ENCODE measurements at regions of chr9 and their contacts with region 1.

Region 1: GRCh38 chr9:5886114-5886939 is 4.4 kb upstream of the MLANA start:
- DNase-seq: peak; percentile 61 to 74 (median 64)
- H3K4me3 ChIP-seq: no peak overlapping the region
- H3K4me3 Mint-ChIP-seq: no peak overlapping the region
- H3K27ac ChIP-seq: no peak overlapping the region
- H3K27ac Mint-ChIP-seq: peak overlapping the region in 2 of 7 donors; percentile 27 to 74
- H3K4me1 ChIP-seq: peaks cover 5% of the 10 kb centered on the region
- H3K4me1 Mint-ChIP-seq: peaks cover 5 to 6% (median 5%) of the 10 kb centered on the region in 4 donors
- H3K27me3 ChIP-seq: no peaks in the 10 kb centered on the region
- H3K27me3 Mint-ChIP-seq: no peaks in the 10 kb centered on the region

Region 2: DNA sequence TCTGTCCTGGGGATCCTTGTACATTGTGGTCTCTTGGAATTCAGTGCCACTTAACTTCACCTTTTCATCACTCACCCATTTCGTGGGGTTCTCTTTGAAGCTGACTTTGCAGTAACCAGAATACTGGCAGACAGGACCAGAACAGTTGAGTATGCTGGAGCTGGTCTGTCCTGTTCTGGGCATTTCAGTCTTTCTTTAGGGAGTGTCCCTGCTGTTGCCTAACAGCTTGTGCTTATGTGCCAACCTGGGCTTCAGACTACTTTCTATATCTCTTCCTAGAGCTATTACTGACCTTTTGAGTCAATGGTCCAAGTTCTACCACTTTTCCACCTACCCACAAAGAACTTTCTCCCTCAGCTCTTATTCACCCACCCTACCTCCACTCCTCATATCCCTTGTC is 690.9 kb before region 1 on chr9:
- CTCF ChIA-PET with region 1: no interaction called
- POLR2A ChIA-PET with region 1: no interaction called
- intact Hi-C with region 1: no loop called
- DNase-seq: no peak
- H3K4me3 ChIP-seq: no peak overlapping the region
- H3K4me3 Mint-ChIP-seq: no peak overlapping the region
- H3K27ac ChIP-seq: no peak overlapping the region
- H3K27ac Mint-ChIP-seq: no peak overlapping the region
- H3K4me1 ChIP-seq: no peaks in the 10 kb centered on the region
- H3K4me1 Mint-ChIP-seq: no peaks in the 10 kb centered on the region
- H3K27me3 ChIP-seq: no peaks in the 10 kb centered on the region
- H3K27me3 Mint-ChIP-seq: peaks cover 3% of the 10 kb centered on the region in 2 donors

Region 3: GRCh38 chr9:5735072-5735471 is 151.3 kb before region 1 on chr9:
- CTCF ChIA-PET with region 1: no interaction called
- POLR2A ChIA-PET with region 1: no interaction called
- intact Hi-C with region 1: no loop called
- DNase-seq: no peak
- H3K4me3 ChIP-seq: no peak overlapping the region
- H3K4me3 Mint-ChIP-seq: no peak overlapping the region
- H3K27ac ChIP-seq: no peak overlapping the region
- H3K27ac Mint-ChIP-seq: peak overlapping the region in 1 of 7 donors; percentile 24
- H3K4me1 ChIP-seq: no peaks in the 10 kb centered on the region
- H3K4me1 Mint-ChIP-seq: no peaks in the 10 kb centered on the region
- H3K27me3 ChIP-seq: no peaks in the 10 kb centered on the region
- H3K27me3 Mint-ChIP-seq: no peaks in the 10 kb centered on the region

Region 4: GRCh38 chr9:5799314-5799713 is 87.0 kb before region 1 on chr9:
- CTCF ChIA-PET with region 1: interaction called, 7 read pairs
- POLR2A ChIA-PET with region 1: interaction called, 3 read pairs
- intact Hi-C with region 1: loop called (anchors 1 kb)
- DNase-seq: peak in 4 of 5 donors; percentile 3 to 15 (median 7)
- H3K4me3 ChIP-seq: no peak overlapping the region
- H3K4me3 Mint-ChIP-seq: no peak overlapping the region
- H3K27ac ChIP-seq: no peak overlapping the region
- H3K27ac Mint-ChIP-seq: peak overlapping the region in 2 of 7 donors; percentile 37 to 63
- H3K4me1 ChIP-seq: peaks cover 4% of the 10 kb centered on the region
- H3K4me1 Mint-ChIP-seq: peaks cover 12 to 22% (median 13%) of the 10 kb centered on the region in 4 donors
- H3K27me3 ChIP-seq: no peaks in the 10 kb centered on the region
- H3K27me3 Mint-ChIP-seq: no peaks in the 10 kb centered on the region

Region 5: GRCh38 chr9:5857928-5858327 is 28.4 kb before region 1 on chr9:
- CTCF ChIA-PET with region 1: interaction called, 14 read pairs
- POLR2A ChIA-PET with region 1: no interaction called
- intact Hi-C with region 1: no loop called
- DNase-seq: no peak
- H3K4me3 ChIP-seq: no peak overlapping the region
- H3K4me3 Mint-ChIP-seq: no peak overlapping the region
- H3K27ac ChIP-seq: no peak overlapping the region
- H3K27ac Mint-ChIP-seq: no peak overlapping the region
- H3K4me1 ChIP-seq: peaks cover 3% of the 10 kb centered on the region
- H3K4me1 Mint-ChIP-seq: peaks cover 5 to 13% (median 9%) of the 10 kb centered on the region in 4 donors
- H3K27me3 ChIP-seq: no peaks in the 10 kb centered on the region
- H3K27me3 Mint-ChIP-seq: no peaks in the 10 kb centered on the region

Region 6: GRCh38 chr9:5863092-5863746 is 23.1 kb before region 1 on chr9:
- CTCF ChIA-PET with region 1: interaction called, 14 read pairs
- POLR2A ChIA-PET with region 1: no interaction called
- intact Hi-C with region 1: no loop called
- DNase-seq: no peak
- H3K4me3 ChIP-seq: no peak overlapping the region
- H3K4me3 Mint-ChIP-seq: no peak overlapping the region
- H3K27ac ChIP-seq: no peak overlapping the region
- H3K27ac Mint-ChIP-seq: no peak overlapping the region
- H3K4me1 ChIP-seq: no peaks in the 10 kb centered on the region
- H3K4me1 Mint-ChIP-seq: no peaks in the 10 kb centered on the region
- H3K27me3 ChIP-seq: no peaks in the 10 kb centered on the region
- H3K27me3 Mint-ChIP-seq: no peaks in the 10 kb centered on the region

Region 7: DNA sequence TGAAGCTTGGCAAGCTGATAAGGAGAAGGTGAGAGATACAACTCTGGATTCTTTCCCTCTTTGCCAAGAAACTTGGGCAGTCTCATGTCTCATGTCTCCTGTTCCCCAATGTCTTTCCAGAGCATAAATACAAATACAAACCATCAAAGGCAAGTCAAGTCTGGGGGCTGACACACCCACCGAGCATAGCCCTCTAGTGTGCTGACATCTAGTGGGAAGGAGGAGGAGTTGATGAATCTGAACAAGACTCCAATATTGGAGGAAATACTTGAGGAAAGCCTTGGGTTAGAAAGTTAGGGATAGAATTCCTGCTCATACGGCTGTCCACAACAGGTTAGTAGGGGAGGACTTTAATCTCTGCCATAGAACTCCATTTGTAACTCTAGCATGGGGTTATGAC is 13.0 kb after region 1 on chr9:
- CTCF ChIA-PET with region 1: interaction called, 14 read pairs
- POLR2A ChIA-PET with region 1: no interaction called
- intact Hi-C with region 1: no loop called
- DNase-seq: no peak
- H3K4me3 ChIP-seq: no peak overlapping the region
- H3K4me3 Mint-ChIP-seq: no peak overlapping the region
- H3K27ac ChIP-seq: no peak overlapping the region
- H3K27ac Mint-ChIP-seq: peak overlapping the region in 1 of 7 donors; percentile 0
- H3K4me1 ChIP-seq: no peaks in the 10 kb centered on the region
- H3K4me1 Mint-ChIP-seq: peaks cover 0 to 1% (median 0%) of the 10 kb centered on the region in 4 donors
- H3K27me3 ChIP-seq: no peaks in the 10 kb centered on the region
- H3K27me3 Mint-ChIP-seq: no peaks in the 10 kb centered on the region

Region 8: GRCh38 chr9:5931657-5932056 is 45.3 kb after region 1 on chr9:
- CTCF ChIA-PET with region 1: no interaction called
- POLR2A ChIA-PET with region 1: no interaction called
- intact Hi-C with region 1: no loop called
- DNase-seq: no peak
- H3K4me3 ChIP-seq: no peak overlapping the region
- H3K4me3 Mint-ChIP-seq: no peak overlapping the region
- H3K27ac ChIP-seq: no peak overlapping the region
- H3K27ac Mint-ChIP-seq: no peak overlapping the region
- H3K4me1 ChIP-seq: no peaks in the 10 kb centered on the region
- H3K4me1 Mint-ChIP-seq: peaks cover 0 to 2% (median 0%) of the 10 kb centered on the region in 4 donors
- H3K27me3 ChIP-seq: no peaks in the 10 kb centered on the region
- H3K27me3 Mint-ChIP-seq: no peaks in the 10 kb centered on the region

Region 9: GRCh38 chr9:6305954-6306563 is 419.7 kb after region 1 on chr9:
- CTCF ChIA-PET with region 1: interaction called, 27 read pairs
- POLR2A ChIA-PET with region 1: no interaction called
- intact Hi-C with region 1: loop called (anchors 1 kb)
- DNase-seq: peak in 4 of 5 donors; percentile 5 to 13 (median 10)
- H3K4me3 ChIP-seq: no peak overlapping the region
- H3K4me3 Mint-ChIP-seq: no peak overlapping the region
- H3K27ac ChIP-seq: no peak overlapping the region
- H3K27ac Mint-ChIP-seq: no peak overlapping the region
- H3K4me1 ChIP-seq: no peaks in the 10 kb centered on the region
- H3K4me1 Mint-ChIP-seq: no peaks in the 10 kb centered on the region
- H3K27me3 ChIP-seq: peaks cover 10% of the 10 kb centered on the region
- H3K27me3 Mint-ChIP-seq: peaks cover 7 to 8% of the 10 kb centered on the region in 2 donors

Region 10: DNA sequence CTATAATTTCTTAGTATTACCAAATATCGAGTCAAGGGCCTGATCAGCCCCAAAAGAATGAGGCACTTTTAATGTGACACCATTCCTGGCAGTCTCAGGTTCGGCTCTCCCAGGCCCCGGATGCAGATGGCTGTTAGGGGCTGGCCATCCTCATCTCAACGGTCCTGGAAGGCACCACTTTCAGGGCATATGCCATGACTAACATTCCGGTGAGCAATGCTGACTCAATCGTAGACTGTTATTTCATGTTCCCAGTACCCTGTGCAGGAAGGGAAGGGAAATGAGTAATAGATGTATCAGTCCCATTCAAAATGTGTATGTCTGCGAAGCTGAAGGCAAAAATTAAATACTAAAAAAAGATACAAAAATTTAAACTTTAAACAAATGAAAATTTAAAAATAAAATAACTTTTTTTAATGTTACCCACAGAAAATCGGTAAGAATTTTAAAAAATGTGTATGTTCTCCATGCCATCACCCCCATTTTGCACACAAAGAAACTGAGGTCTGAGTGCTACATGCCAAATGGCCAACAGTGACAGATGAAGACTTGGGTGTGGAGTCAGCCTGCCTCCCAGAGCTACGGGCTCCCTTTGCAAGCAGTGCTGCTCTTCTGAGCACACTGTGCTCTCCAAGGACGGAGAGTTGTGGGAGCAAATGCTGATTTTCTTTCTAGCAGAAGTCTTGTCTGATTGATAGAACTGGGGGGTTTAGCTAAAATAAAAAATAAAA is 680.2 kb after region 1 on chr9:
- CTCF ChIA-PET with region 1: no interaction called
- POLR2A ChIA-PET with region 1: no interaction called
- intact Hi-C with region 1: loop called (anchors 2 kb)
- DNase-seq: no peak
- H3K4me3 ChIP-seq: no peak overlapping the region
- H3K4me3 Mint-ChIP-seq: no peak overlapping the region
- H3K27ac ChIP-seq: no peak overlapping the region
- H3K27ac Mint-ChIP-seq: peak overlapping the region in 2 of 7 donors; percentile 2 to 42
- H3K4me1 ChIP-seq: no peaks in the 10 kb centered on the region
- H3K4me1 Mint-ChIP-seq: peaks cover 0 to 1% (median 0%) of the 10 kb centered on the region in 4 donors
- H3K27me3 ChIP-seq: no peaks in the 10 kb centered on the region
- H3K27me3 Mint-ChIP-seq: peaks cover 0 to 1% of the 10 kb centered on the region in 2 donors